ENCODE measurements at regions of chr4 and their contacts with region 1.

Region 1: DNA sequence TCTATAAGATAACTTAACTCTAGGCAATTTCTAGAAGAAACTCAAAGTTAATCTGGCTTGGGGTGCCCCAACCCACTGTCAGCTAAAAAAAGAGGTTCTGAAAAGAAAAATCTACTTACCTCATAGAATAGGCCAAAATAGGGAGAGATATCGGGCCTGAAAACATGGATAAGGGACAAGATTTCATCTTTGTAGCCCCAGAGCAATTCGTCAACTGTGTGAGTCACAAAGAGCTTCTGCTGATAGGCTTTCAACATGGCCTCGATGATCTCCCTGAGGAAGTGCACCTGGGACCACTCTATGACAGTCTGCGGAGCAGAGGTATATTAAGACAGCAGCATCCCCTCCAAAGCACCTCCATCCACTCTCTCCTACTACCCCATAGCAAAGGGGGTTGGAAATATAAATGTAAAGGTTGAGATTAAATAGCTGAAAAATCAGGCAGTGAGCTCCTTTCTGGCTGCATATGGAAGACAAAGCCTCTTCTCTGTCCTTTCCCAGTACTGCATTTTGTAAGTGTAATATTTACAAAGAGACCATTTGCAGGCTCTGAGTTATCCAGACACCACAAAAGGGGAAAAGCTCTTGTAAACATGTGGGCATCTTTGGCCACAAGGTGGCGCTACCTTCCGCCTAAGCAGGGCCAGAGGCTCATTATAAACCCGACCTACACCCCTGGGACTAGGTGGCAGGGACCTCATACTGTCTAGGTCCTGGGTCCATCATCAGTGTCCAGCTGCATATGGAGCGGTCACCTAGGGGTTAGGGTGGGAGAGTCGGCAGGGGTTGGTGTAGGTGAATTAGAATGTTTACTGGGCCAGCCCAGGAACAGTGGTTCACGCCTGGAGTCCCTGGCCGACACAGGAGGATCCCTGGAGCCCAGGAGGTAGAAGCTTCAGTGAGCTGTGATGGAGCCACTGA is 31.5 kb upstream of the NUP54 start:
- DNase-seq: no peak
- ATAC-seq: peak; percentile 99
- H3K4me3 ChIP-seq: no peak overlapping the region
- H3K27ac ChIP-seq: no peak overlapping the region
- H3K4me1 ChIP-seq: no peaks in the 10 kb centered on the region
- H3K27me3 ChIP-seq: no peaks in the 10 kb centered on the region
- CTCF ChIP-seq: peak; percentile 86 to 91 (median 86)
- EP300 ChIP-seq: no peak
- POLR2A ChIP-seq: no peak
- RAD21 ChIP-seq: peak; percentile 97

Region 2: DNA sequence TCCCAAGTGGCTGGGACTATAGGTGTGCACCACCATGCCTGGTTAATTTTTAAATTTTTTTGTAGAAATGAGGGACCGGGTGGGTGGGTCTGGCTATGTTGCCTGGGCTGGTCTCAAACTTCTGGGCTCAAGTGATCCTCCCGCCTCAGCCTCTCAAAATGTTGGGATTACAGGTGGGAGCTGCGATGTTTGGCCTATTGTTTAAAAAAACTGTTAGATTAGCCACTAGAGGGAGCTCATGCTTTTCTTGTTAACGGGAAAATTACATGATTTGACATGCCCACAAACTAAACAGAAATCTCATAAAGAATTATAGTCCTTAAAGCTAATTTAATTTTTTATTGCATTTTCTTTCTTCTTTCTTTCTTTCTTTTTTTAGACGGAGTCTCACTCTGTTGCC is 183.9 kb before region 1 on chr4:
- CTCF ChIA-PET with region 1: interaction called, 13 read pairs
- POLR2A ChIA-PET with region 1: no interaction called
- RAD21 ChIA-PET with region 1: no interaction called
- SMC1A ChIA-PET with region 1: interaction called, 5 read pairs
- in situ Hi-C with region 1: no loop called
- intact Hi-C with region 1: no loop called
- DNase-seq: no peak
- ATAC-seq: peak; percentile 52
- H3K4me3 ChIP-seq: no peak overlapping the region
- H3K27ac ChIP-seq: no peak overlapping the region
- H3K4me1 ChIP-seq: no peaks in the 10 kb centered on the region
- H3K27me3 ChIP-seq: no peaks in the 10 kb centered on the region; a peak in 1 of 4 replicates
- CTCF ChIP-seq: peak; percentile 46 to 62 (median 53); a peak in 5 of 6 replicates
- EP300 ChIP-seq: no peak
- POLR2A ChIP-seq: no peak
- RAD21 ChIP-seq: peak; percentile 80

Region 3: GRCh38 chr4:76198411-76199237 is 19.0 kb after region 1 on chr4:
- CTCF ChIA-PET with region 1: interaction called, 14 read pairs
- POLR2A ChIA-PET with region 1: no interaction called
- RAD21 ChIA-PET with region 1: interaction called, 4 read pairs
- SMC1A ChIA-PET with region 1: interaction called, 9 read pairs
- in situ Hi-C with region 1: no loop called
- intact Hi-C with region 1: no loop called
- DNase-seq: peak; percentile 87
- ATAC-seq: peak; percentile 74
- H3K4me3 ChIP-seq: peak overlapping the region; percentile 24
- H3K27ac ChIP-seq: peak overlapping the region; percentile 95
- H3K4me1 ChIP-seq: peaks cover 58% of the 10 kb centered on the region
- H3K27me3 ChIP-seq: no peaks in the 10 kb centered on the region
- CTCF ChIP-seq: no peak
- EP300 ChIP-seq: peak; percentile 5 to 25; a peak in 1 of 4 replicates
- POLR2A ChIP-seq: no peak
- RAD21 ChIP-seq: no peak

Region 4: GRCh38 chr4:76213415-76214176 is 33.9 kb after region 1 on chr4 and contains the start of gene SCARB2:
- CTCF ChIA-PET with region 1: interaction called, 38 read pairs
- POLR2A ChIA-PET with region 1: no interaction called
- RAD21 ChIA-PET with region 1: interaction called, 11 read pairs
- SMC1A ChIA-PET with region 1: interaction called, 25 read pairs
- in situ Hi-C with region 1: no loop called
- intact Hi-C with region 1: no loop called
- DNase-seq: no peak
- ATAC-seq: peak; percentile 89
- H3K4me3 ChIP-seq: peak within 1 kb of the TSS; percentile 78
- H3K27ac ChIP-seq: peak within 1 kb of the TSS; percentile 60
- H3K4me1 ChIP-seq: peaks cover 19% of the 10 kb centered on the region
- H3K27me3 ChIP-seq: no peaks in the 10 kb centered on the region
- CTCF ChIP-seq: no peak
- EP300 ChIP-seq: no peak
- POLR2A ChIP-seq: peak; percentile 76
- RAD21 ChIP-seq: no peak
- polyA plus RNA-seq, gene SCARB2: 2.1 to 3.7 TPM

Region 5: GRCh38 chr4:76377911-76378310 is 198.3 kb after region 1 on chr4:
- CTCF ChIA-PET with region 1: interaction called, 214 read pairs
- POLR2A ChIA-PET with region 1: interaction called, 3 read pairs
- RAD21 ChIA-PET with region 1: interaction called, 110 read pairs
- SMC1A ChIA-PET with region 1: interaction called, 126 read pairs
- in situ Hi-C with region 1: loop called (anchors 5 kb)
- intact Hi-C with region 1: loop called (anchors 1 kb)
- DNase-seq: no peak
- ATAC-seq: peak; percentile 32; the same call in 1 of the 3 replicates
- H3K4me3 ChIP-seq: no peak overlapping the region
- H3K27ac ChIP-seq: no peak overlapping the region
- H3K4me1 ChIP-seq: no peaks in the 10 kb centered on the region
- H3K27me3 ChIP-seq: no peaks in the 10 kb centered on the region; a peak in 2 of 4 replicates
- CTCF ChIP-seq: peak; percentile 49 to 52 (median 52); a peak in 5 of 6 replicates
- EP300 ChIP-seq: no peak
- POLR2A ChIP-seq: no peak
- RAD21 ChIP-seq: peak; percentile 84

Region 6: DNA sequence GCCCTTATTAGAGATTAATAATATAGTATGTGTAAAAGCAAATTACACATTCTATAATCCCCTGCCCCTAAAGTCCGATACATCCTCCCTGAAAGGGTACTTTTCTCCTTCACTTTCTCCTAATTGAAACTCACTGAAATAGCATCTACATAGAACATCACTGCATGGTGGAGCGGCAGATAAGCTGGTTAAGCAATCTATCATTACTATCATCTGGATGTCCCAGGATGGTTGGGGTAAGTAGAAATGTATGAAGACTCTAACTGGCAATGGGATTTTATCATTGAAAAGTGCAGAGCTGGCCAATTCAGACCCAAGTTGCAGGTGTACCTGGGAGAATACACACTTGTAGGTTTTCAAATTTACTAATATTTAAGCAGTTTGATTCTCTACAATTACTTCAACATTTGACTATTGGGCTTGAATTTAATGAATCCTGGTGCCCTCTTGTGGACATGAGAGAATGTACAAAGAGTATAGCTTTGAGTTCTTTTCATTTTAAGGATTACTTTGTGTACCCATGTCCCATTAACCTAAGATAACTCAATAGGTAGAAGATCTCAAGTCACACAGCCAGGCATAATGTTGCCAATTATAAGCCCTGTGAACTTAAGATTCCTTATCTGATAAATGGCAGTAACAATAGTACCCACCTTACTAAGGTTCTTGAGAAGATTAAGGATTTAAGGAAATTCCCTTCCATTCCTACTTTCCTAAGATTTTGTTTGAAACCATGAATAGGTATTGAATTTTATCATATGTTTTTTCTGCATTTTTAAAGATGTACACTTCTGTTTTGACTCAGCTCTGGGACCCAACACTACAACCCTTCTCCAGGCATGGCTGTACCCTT is 325.2 kb after region 1 on chr4:
- CTCF ChIA-PET with region 1: interaction called, 120 read pairs
- POLR2A ChIA-PET with region 1: no interaction called
- RAD21 ChIA-PET with region 1: interaction called, 24 read pairs
- SMC1A ChIA-PET with region 1: interaction called, 37 read pairs
- in situ Hi-C with region 1: loop called (anchors 5 kb)
- intact Hi-C with region 1: loop called (anchors 1 kb)
- DNase-seq: no peak
- ATAC-seq: peak; percentile 76
- H3K4me3 ChIP-seq: no peak overlapping the region
- H3K27ac ChIP-seq: no peak overlapping the region
- H3K4me1 ChIP-seq: no peaks in the 10 kb centered on the region
- H3K27me3 ChIP-seq: no peaks in the 10 kb centered on the region
- CTCF ChIP-seq: peak; percentile 49 to 58 (median 52); a peak in 5 of 6 replicates
- EP300 ChIP-seq: no peak
- POLR2A ChIP-seq: no peak
- RAD21 ChIP-seq: peak; percentile 73

Measured in GM12878 (cell line).